ENCODE measurements at regions of chr11 and their contacts with region 1.

Region 1: GRCh38 chr11:128695539-128696221 is 1.8 kb downstream of the FLI1 start:
- DNase-seq: peak in 2 of 5 donors; percentile 60
- ATAC-seq: peak; percentile 7 to 66 (median 34)
- H3K4me3 ChIP-seq: peak overlapping the region; percentile 67 to 97 (median 85)
- H3K27ac ChIP-seq: peak overlapping the region; percentile 89 to 98 (median 96)
- H3K4me1 ChIP-seq: peaks cover 0 to 70% (median 34%) of the 10 kb centered on the region in 12 donors
- H3K27me3 ChIP-seq: peaks cover 0 to 50% (median 0%) of the 10 kb centered on the region in 9 donors
- CTCF ChIP-seq: no peak
- POLR2A ChIP-seq: no peak

Region 2: GRCh38 chr11:128715691-128716561 is 20.2 kb after region 1 on chr11:
- intact Hi-C with region 1: loop called in 1 of 10 experiments (anchors 2 kb)
- DNase-seq: peak in 3 of 5 donors; percentile 40 to 52 (median 44)
- ATAC-seq: peak; percentile 41 to 86 (median 62)
- H3K4me3 ChIP-seq: peak overlapping the region in 7 of 12 donors; percentile 4 to 30 (median 14)
- H3K27ac ChIP-seq: peak overlapping the region; percentile 42 to 95 (median 76)
- H3K4me1 ChIP-seq: peaks cover 14 to 99% (median 79%) of the 10 kb centered on the region in 12 donors
- H3K27me3 ChIP-seq: no peaks in the 10 kb centered on the region
- CTCF ChIP-seq: no peak
- POLR2A ChIP-seq: no peak

Region 3: DNA sequence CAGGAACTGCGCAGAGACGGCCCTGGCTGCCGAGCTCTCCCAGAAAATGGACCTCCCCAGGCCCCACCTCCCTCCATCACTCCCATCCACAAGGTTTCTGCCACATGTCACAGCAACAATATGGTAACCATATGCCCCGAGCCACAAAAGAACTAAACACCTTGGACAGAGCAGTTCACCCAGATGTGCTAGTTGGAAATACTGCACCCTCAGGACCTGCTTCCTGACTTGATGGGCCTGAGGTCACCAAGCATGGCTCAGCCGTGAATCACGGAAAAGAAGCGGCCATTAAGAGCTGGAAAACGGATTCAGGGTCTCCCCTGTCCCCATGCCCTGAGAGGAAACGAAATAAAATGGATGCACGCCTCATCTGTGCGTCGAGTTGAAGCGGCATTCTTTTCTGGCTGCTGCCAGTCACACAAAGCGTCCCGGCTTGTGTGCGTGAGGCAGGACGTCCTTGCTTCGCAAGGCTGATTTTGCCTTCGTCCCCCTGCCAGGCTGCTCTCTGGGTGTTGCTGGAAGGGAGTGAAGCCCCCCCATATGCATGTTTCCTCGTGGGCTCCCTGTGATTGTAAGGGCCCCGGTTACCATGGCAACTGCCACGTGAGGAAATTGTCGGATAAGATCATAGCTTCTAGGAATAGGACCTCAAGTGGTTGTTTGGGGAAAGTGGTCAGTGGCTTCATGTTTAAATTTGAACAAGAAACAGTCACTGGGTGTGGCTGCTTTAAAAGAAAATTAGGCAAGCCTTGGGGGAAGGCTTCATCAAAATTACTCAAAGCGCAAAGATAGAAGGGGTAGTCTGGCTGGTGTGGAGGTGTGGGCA is 49.8 kb after region 1 on chr11:
- intact Hi-C with region 1: loop called in 4 of 10 experiments (anchors 10 kb)
- DNase-seq: peak in 1 of 5 donors; percentile 43
- ATAC-seq: peak in 2 of 4 donors; percentile 16 to 41
- H3K4me3 ChIP-seq: no peak overlapping the region
- H3K27ac ChIP-seq: peak overlapping the region in 3 of 12 donors; percentile 4 to 35 (median 10)
- H3K4me1 ChIP-seq: peaks cover 0 to 65% (median 27%) of the 10 kb centered on the region in 12 donors
- H3K27me3 ChIP-seq: no peaks in the 10 kb centered on the region
- CTCF ChIP-seq: peak in 1 of 12 donors; percentile 22
- POLR2A ChIP-seq: no peak

Region 4: GRCh38 chr11:128764424-128765095 is 68.9 kb after region 1 on chr11:
- intact Hi-C with region 1: loop called in 4 of 10 experiments (anchors 5 to 10 kb)
- DNase-seq: no peak
- ATAC-seq: no peak
- H3K4me3 ChIP-seq: no peak overlapping the region
- H3K27ac ChIP-seq: no peak overlapping the region
- H3K4me1 ChIP-seq: peaks cover 0 to 43% (median 25%) of the 10 kb centered on the region in 12 donors
- H3K27me3 ChIP-seq: no peaks in the 10 kb centered on the region
- CTCF ChIP-seq: no peak
- POLR2A ChIP-seq: no peak

Region 5: DNA sequence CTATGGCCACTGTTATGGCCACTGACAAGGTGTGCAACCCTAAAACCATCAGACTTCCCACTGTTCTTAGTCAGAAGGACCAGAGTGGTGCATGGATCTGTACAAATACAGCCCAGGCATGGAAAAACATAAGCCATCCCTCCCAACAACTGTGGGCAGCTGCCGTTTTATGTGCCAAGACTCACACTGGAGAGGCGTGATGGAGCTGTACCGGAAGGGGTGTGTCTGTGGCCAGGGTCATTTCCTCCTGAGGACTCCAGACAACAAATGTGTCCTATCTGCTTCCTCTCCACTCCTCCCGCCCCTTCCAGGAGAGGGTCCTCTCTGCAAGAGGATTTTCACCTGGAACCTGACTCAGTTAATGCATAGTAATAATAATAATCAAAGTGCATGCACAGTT is 141.9 kb after region 1 on chr11:
- intact Hi-C with region 1: loop called in 3 of 10 experiments (anchors 2 to 5 kb)
- DNase-seq: no peak
- ATAC-seq: peak in 3 of 4 donors; percentile 41 to 71 (median 54)
- H3K4me3 ChIP-seq: no peak overlapping the region
- H3K27ac ChIP-seq: peak overlapping the region in 3 of 12 donors; percentile 4 to 27 (median 6)
- H3K4me1 ChIP-seq: peaks cover 0 to 31% (median 20%) of the 10 kb centered on the region in 12 donors
- H3K27me3 ChIP-seq: no peaks in the 10 kb centered on the region
- CTCF ChIP-seq: no peak
- POLR2A ChIP-seq: no peak